ENCODE measurements at regions of chr17 and their contacts with region 1.

Region 1: DNA sequence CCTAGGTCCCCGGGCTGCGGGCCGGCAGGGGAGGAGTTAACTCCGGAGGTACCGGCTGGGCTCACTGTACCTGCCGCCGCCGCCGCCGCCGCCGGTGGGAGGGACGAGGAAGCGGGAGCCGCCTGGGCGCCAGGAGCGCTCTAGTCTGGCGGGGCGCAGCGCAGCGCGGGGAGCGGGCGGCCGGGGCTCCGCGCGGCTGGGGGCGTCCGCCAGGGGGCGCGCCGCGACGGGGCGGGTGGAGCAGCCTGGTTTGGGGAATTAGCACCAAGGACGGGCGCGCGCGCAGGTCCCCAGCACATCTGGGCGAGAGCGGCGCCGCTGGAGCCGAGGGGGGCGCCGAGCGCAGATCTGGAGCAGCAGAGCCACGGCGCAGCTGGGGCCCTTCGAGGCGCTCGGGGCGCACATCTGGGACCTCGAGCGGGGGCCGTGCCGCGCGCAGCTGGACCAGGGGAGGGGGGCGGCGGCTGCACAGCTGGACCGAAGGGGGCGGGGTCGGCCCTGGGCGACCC is at the start of gene NXPH3:
- DNase-seq: no peak
- H3K4me3 ChIP-seq: peak within 1 kb of the TSS; percentile 61 to 91 (median 86)
- H3K27ac ChIP-seq: peak within 1 kb of the TSS; percentile 84 to 91 (median 88)
- H3K4me1 ChIP-seq: peaks cover 25 to 59% (median 51%) of the 10 kb centered on the region in 4 donors
- H3K27me3 ChIP-seq: no peaks in the 10 kb centered on the region
- CTCF ChIP-seq: peak; percentile 69 to 92 (median 80)
- EP300 ChIP-seq: no peak
- POLR2A ChIP-seq: no peak
- total RNA-seq, gene NXPH3: 12.6 to 37.8 (median 21.2) TPM

Region 2: DNA sequence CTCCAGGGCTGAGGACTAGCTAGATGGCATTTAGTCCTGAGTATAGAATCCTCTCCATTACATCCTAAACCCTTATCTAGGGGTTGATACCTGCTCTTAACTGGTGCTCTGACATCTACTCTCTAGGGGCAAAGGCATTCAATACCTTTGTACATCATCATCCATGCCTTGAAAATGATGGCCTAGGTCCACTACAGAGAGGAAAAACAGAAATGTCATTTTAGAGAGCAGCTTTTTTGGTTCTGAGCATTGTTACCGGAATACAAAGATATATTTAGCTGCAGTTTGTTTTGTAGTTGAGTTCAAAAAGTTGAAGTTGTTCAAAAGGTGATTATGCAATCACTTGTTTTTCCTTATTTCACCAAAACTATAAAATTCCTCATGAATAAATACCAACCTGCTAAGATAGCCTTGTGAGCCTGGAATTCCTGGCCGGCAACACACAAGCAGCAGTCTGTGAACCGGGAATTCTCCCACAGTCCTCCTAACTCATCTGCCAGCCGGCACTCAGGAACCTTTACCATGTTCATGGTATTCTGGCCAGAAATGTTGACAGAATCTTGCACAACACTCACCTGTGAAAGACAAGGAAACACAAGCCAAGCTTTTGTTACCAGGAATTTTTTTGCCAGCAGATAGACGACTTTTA is 35.4 kb after region 1 on chr17:
- intact Hi-C with region 1: loop called (anchors 5 kb)
- DNase-seq: no peak
- H3K4me3 ChIP-seq: no peak overlapping the region
- H3K27ac ChIP-seq: peak overlapping the region; percentile 22 to 74 (median 52)
- H3K4me1 ChIP-seq: peaks cover 23 to 63% (median 55%) of the 10 kb centered on the region in 4 donors
- H3K27me3 ChIP-seq: no peaks in the 10 kb centered on the region
- CTCF ChIP-seq: no peak
- EP300 ChIP-seq: no peak
- POLR2A ChIP-seq: no peak

Region 3: DNA sequence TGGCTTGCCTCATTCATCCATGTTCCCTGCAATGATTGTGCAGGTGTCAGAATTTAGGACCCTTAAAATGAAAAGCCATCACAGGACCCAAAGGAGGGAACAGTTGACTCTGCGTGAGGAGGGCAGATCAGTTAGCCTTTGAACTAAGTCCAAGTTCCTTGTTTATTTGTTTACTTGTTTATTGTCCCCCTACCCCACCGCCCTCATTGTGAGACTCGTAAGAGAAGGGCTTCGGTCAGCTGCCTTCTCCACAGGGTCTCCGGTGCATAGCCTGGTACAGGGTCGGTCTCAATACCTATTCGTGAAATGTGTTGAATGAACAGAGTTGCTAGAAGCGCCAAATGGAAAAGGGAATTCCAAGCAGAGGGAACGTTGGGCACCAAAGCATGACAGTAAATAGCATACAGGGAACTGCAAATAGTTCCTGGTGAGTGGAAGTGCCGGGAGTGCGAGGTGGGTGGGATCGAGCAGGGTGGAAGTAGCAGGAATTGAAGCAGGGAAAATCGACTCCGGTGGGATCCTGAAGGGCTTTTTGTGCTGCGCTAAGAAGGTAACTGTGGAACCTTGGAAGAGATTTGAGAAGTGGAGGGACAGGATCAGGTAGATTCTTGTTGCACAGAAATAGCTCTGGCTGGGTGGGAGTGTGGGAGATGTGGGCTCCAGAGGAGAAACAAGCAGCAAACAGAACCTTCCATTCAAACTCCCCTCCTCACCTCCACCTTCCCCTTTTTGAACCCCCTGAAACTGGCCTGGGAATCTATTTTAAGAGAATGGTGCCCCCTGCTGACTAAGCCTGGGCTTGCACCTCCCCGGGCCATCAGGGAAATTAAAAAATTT is 119.4 kb after region 1 on chr17:
- intact Hi-C with region 1: loop called (anchors 2 kb)
- DNase-seq: peak; percentile 94
- H3K4me3 ChIP-seq: peak overlapping the region in 3 of 4 donors; percentile 1 to 22 (median 4)
- H3K27ac ChIP-seq: peak overlapping the region in 1 of 4 donors; percentile 42
- H3K4me1 ChIP-seq: peaks cover 28 to 39% (median 36%) of the 10 kb centered on the region in 4 donors
- H3K27me3 ChIP-seq: no peaks in the 10 kb centered on the region
- CTCF ChIP-seq: peak; percentile 97 to 99 (median 98)
- EP300 ChIP-seq: no peak
- POLR2A ChIP-seq: no peak

Region 4: DNA sequence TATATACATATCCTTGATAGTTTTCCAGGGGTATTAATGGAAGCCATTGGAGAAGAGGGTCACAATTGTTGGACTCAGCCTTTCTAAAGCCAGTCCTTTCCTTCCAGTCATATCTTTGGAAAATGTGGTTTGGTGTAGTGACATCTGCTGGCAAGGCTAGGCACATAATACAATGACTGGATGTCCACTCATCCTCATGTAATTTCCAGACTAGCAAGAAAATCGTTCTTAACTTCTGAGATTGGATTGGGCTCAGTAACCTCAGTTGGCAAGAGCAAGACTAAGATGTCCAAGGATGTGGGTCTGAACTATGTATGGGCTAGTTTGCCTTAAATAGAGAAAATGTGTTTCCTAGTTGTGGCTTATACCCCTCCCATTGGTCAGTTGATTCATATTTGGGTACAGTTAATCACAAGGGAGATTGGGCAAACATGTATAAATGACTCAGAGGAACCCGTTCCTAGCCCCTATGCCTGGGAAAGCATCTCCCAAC is 204.2 kb after region 1 on chr17:
- intact Hi-C with region 1: loop called (anchors 5 kb)
- DNase-seq: no peak
- H3K4me3 ChIP-seq: no peak overlapping the region
- H3K27ac ChIP-seq: peak overlapping the region; percentile 56 to 76 (median 73)
- H3K4me1 ChIP-seq: peaks cover 37 to 86% (median 75%) of the 10 kb centered on the region in 4 donors
- H3K27me3 ChIP-seq: no peaks in the 10 kb centered on the region
- CTCF ChIP-seq: peak; percentile 62 to 84 (median 63)
- EP300 ChIP-seq: no peak
- POLR2A ChIP-seq: no peak

Region 5: GRCh38 chr17:49845321-49845720 is 269.7 kb after region 1 on chr17:
- intact Hi-C with region 1: loop called (anchors 5 kb)
- DNase-seq: no peak
- H3K4me3 ChIP-seq: no peak overlapping the region
- H3K27ac ChIP-seq: peak overlapping the region; percentile 51 to 68 (median 64)
- H3K4me1 ChIP-seq: peaks cover 22 to 61% (median 45%) of the 10 kb centered on the region in 4 donors
- H3K27me3 ChIP-seq: no peaks in the 10 kb centered on the region
- CTCF ChIP-seq: no peak
- EP300 ChIP-seq: no peak
- POLR2A ChIP-seq: no peak

Region 6: DNA sequence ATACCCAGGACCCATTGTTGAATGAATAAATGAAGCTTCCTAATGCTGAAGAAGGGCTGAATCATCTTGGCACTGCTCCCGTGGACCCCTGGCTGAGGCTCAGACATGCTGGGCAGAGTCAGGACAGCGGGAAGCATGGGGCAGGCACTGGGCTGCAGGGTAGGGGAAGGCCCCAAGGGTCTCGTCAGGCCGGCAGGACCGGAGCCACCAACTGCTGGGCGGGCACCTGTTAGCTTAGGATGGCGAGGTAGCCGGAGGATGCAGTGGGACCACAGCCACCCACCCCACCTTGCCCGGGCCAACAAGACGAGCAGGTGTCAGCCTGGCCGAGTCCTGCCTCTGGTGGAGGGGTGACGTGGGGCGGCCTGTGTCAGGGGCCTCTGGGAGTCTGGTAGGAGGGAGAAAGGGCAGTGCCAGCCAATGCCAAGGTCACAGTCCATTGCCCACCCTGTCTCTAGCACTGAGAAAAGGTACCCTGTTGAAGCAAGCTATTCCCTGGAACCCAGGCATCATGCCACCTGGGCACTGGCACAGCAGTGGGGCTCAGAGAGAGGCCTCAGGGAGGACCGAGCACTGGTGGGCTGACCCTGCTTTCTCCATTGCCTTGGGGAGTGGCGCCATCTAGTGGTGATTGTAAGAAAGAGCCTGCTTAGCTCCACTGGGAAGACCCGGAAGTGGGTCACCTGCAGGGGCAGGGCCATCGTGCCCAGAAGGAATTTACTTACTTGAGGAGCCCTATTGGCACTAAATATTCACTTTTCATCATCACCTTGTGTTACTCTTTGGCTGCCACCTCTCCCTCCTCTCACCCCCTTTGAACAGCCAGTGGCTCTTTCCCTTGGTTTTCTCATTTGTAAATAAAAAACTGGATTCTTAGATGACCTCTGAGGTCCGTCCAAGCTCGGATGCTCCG is 422.4 kb after region 1 on chr17:
- intact Hi-C with region 1: loop called (anchors 10 kb)
- DNase-seq: no peak
- H3K4me3 ChIP-seq: no peak overlapping the region
- H3K27ac ChIP-seq: no peak overlapping the region
- H3K4me1 ChIP-seq: peaks cover 33 to 50% (median 39%) of the 10 kb centered on the region in 4 donors
- H3K27me3 ChIP-seq: peaks cover 2 to 98% (median 44%) of the 10 kb centered on the region in 4 donors
- CTCF ChIP-seq: peak; percentile 84 to 98 (median 94)
- EP300 ChIP-seq: no peak
- POLR2A ChIP-seq: no peak

Measured in esophagus muscularis mucosa (tissue), 4 donors.